WTC11 (cell line): ENCODE measurements at regions of chr9 and their contacts with region 1.

Region 1: DNA sequence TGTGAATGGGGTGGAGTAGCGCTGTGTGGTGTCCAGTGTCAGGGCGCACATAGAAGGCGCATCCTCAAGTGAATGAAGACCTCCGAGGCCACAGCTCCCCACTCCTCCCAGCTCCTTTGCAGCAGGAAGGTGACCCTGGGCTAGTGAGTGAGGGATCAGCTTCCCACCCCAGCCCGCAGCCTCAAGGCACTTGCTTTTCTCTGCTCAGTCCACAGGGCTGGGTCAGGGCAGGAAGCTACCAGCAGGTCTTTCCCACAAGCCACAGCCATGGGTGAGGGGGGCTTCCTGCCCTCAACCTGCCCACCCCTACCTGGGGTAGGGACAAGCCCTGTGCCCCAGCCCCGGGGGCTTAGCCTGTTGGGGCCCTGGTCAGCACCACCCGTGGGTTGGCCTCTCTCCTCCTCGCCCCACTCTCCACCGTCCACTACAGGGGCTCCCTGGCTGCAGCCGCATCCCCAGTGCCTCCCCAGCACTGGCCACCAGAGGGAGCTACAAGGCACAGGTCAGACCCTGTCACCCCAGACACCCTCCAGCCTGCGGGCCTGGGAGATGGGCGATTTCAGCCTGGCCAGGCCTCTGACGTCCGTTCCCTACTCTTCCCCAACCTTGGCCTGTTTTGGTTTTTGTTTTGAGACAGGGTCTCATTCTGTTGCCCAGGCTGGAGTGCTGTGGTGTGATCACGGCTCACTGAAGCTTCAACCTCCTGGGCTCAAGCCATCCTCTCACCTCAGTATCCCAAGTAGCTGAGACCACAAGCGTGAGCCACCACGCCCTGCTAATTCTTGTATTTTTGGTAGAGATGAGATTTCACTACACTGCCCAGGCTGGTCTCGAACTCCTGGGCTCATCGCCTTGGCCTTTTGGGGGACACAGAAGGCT is 1.3 kb upstream of the ABCA2 start:
- DNase-seq: peak; percentile 95
- ATAC-seq: peak; percentile 74
- H3K4me3 Mint-ChIP-seq: peak overlapping the region; percentile 58
- H3K27ac Mint-ChIP-seq: no peak overlapping the region; the same call in 1 of the 2 replicates
- H3K4me1 Mint-ChIP-seq: 0 out of 2 replicates have a peak, but pooled peaks cover 2% of the 10 kb centered on the region
- H3K27me3 Mint-ChIP-seq: peaks cover 17% of the 10 kb centered on the region
- CTCF ChIP-seq: peak; percentile 84

Region 2: GRCh38 chr9:136799854-136800657 is 229.2 kb before region 1 on chr9:
- CTCF ChIA-PET with region 1: interaction called, 21 read pairs
- POLR2A ChIA-PET with region 1: no interaction called
- DNase-seq: peak; percentile 92
- ATAC-seq: peak; percentile 54
- H3K4me3 Mint-ChIP-seq: peak overlapping the region; percentile 90
- H3K27ac Mint-ChIP-seq: peak overlapping the region; percentile 97
- H3K4me1 Mint-ChIP-seq: peaks cover 17% of the 10 kb centered on the region
- H3K27me3 Mint-ChIP-seq: peaks cover 58% of the 10 kb centered on the region
- CTCF ChIP-seq: no peak

Region 3: GRCh38 chr9:136971710-136972109 is 57.6 kb before region 1 on chr9:
- CTCF ChIA-PET with region 1: interaction called, 117 read pairs
- POLR2A ChIA-PET with region 1: no interaction called
- DNase-seq: no peak
- ATAC-seq: no peak
- H3K4me3 Mint-ChIP-seq: no peak overlapping the region
- H3K27ac Mint-ChIP-seq: no peak overlapping the region
- H3K4me1 Mint-ChIP-seq: no peaks in the 10 kb centered on the region
- H3K27me3 Mint-ChIP-seq: no peaks in the 10 kb centered on the region
- CTCF ChIP-seq: no peak

Region 4: GRCh38 chr9:137000177-137000883 is 29.0 kb before region 1 on chr9:
- CTCF ChIA-PET with region 1: interaction called, 53 read pairs
- POLR2A ChIA-PET with region 1: no interaction called
- DNase-seq: no peak
- ATAC-seq: no peak
- H3K4me3 Mint-ChIP-seq: no peak overlapping the region
- H3K27ac Mint-ChIP-seq: no peak overlapping the region
- H3K4me1 Mint-ChIP-seq: 0 out of 2 replicates have a peak, but pooled peaks cover 4% of the 10 kb centered on the region
- H3K27me3 Mint-ChIP-seq: peaks cover 6% of the 10 kb centered on the region; the same call in 1 of the 2 replicates
- CTCF ChIP-seq: no peak

Region 5: GRCh38 chr9:137046098-137046787 is 16.9 kb after region 1 on chr9 and contains the start of gene NPDC1:
- CTCF ChIA-PET with region 1: interaction called, 63 read pairs
- POLR2A ChIA-PET with region 1: no interaction called
- DNase-seq: peak; percentile 94
- ATAC-seq: peak; percentile 69
- H3K4me3 Mint-ChIP-seq: peak within 1 kb of the TSS; percentile 77
- H3K27ac Mint-ChIP-seq: no peak within 1 kb of the TSS
- H3K4me1 Mint-ChIP-seq: peaks cover 10% of the 10 kb centered on the region
- H3K27me3 Mint-ChIP-seq: peaks cover 47% of the 10 kb centered on the region
- CTCF ChIP-seq: peak; percentile 83
- total RNA-seq, gene NPDC1: 64.3 to 68.8 TPM (median 64.5 TPM) in 3 replicates

Region 6: DNA sequence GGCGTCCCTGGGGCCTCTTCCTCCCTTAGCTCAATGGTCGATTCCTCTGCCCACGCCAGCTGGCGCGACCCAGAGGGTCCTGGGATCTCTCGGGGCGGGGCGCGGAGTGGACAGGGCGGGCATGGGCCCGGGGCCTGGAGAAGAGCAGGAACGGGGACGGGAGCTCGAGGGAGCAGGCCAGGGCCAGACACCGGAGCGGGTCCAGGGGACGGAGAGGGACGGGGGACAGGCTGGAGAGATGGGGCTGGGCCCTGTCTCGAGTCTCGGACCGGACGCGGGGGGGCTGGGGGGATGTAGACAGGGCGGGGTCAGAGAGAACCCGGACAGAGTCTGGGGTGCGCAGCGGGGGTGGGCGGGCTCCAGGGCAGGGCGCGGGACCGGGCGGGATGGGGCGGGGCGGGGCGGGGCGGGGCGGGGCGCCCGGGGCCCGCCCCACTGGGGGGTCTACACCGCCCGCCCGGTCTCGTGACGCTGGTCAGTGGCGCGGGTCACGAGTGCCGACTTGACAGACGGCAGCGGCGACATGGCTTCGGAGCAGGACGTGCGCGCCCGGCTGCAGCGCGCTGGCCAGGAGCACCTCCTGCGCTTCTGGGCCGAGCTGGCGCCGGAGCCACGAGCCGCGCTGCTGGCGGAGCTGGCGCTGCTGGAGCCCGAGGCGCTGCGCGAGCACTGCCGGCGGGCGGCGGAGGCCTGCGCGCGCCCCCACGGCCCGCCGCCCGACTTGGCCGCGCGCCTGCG is 47.9 kb after region 1 on chr9 and contains the start of gene UAP1L1:
- CTCF ChIA-PET with region 1: interaction called, 91 read pairs
- POLR2A ChIA-PET with region 1: no interaction called
- DNase-seq: peak; percentile 64
- ATAC-seq: peak; percentile 29
- H3K4me3 Mint-ChIP-seq: peak within 1 kb of the TSS; percentile 69
- H3K27ac Mint-ChIP-seq: no peak within 1 kb of the TSS
- H3K4me1 Mint-ChIP-seq: peaks cover 16% of the 10 kb centered on the region
- H3K27me3 Mint-ChIP-seq: peaks cover 36% of the 10 kb centered on the region
- CTCF ChIP-seq: no peak
- total RNA-seq, gene UAP1L1: 12.1 to 17.7 TPM (median 14.3 TPM) in 3 replicates

Region 7: DNA sequence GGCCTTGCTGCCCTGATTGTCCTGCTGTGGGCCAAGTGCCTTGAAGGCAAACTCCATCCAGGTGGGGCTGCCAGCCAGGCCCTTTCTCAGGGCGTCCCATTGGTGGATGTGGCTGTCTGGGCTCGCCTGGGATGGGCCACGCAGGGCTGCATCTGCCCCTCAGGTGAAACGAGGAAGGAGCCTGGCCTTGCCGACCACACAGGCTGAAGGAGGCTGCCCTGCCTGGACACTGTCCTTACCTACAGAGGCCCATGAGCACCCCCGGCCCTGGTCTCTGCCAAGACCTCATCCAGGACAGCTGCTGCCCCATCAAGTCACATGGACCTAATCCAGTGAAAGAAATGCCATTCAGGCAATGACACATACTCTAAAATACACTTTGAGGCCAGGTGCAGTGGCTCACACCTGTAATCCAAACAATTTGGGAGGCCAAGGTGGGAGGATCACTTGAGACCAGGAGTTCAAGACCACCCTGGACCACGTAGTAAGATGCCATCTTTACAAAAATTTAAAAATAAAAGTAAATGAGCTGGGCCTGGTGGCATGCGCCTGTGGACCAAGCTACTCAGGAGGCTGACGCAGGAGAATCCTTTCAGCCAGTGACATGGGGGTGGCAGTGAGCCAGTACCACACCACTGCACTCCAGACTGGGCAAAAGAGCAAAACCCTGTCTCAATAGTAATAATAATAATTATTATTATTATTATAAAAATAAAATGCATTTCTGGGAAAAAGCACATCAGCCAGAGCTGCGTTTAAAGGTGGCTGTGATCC is 487.0 kb after region 1 on chr9:
- CTCF ChIA-PET with region 1: no interaction called
- POLR2A ChIA-PET with region 1: no interaction called
- DNase-seq: no peak
- ATAC-seq: peak; percentile 46; the same call in 1 of the 2 replicates
- H3K4me3 Mint-ChIP-seq: no peak overlapping the region
- H3K27ac Mint-ChIP-seq: no peak overlapping the region
- H3K4me1 Mint-ChIP-seq: no peaks in the 10 kb centered on the region
- H3K27me3 Mint-ChIP-seq: no peaks in the 10 kb centered on the region
- CTCF ChIP-seq: no peak